Colonic mucosa (tissue), 4 donors: ENCODE measurements at regions of chr9 and their contacts with region 1.

Region 1: GRCh38 chr9:68584189-68585033 is 43.7 kb upstream of the TMEM252 start:
- DNase-seq: peak; percentile 92
- H3K4me3 ChIP-seq: no peak overlapping the region
- H3K27ac ChIP-seq: no peak overlapping the region
- H3K4me1 ChIP-seq: no peaks in the 10 kb centered on the region
- H3K27me3 ChIP-seq: no peaks in the 10 kb centered on the region
- CTCF ChIP-seq: peak; percentile 98

Region 2: GRCh38 chr9:68640421-68641089 is 56.1 kb after region 1 on chr9:
- intact Hi-C with region 1: no loop called
- DNase-seq: no peak
- H3K4me3 ChIP-seq: no peak overlapping the region
- H3K27ac ChIP-seq: no peak overlapping the region
- H3K4me1 ChIP-seq: no peaks in the 10 kb centered on the region
- H3K27me3 ChIP-seq: no peaks in the 10 kb centered on the region
- CTCF ChIP-seq: no peak

Region 3: DNA sequence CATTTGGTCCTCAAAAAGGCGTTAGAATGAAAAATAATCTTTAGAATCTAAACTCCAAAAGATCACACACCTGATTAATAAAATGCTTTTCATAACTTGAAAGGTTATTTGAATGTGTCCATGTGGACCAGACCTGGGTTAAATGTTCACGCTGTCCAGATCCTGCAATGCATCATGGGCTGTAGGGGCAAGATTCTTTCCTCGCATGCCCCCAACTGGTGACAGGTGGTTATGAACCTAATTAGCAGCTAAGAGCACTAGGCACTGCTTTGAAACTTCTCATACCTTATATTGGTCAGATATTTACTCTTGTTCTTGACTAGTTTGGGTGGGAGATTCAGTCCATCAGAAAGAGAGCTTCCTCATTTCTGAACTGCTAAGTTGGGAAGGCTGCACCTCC is 101.4 kb after region 1 on chr9:
- intact Hi-C with region 1: loop called (anchors 5 kb)
- DNase-seq: peak; percentile 82
- H3K4me3 ChIP-seq: no peak overlapping the region
- H3K27ac ChIP-seq: no peak overlapping the region
- H3K4me1 ChIP-seq: no peaks in the 10 kb centered on the region
- H3K27me3 ChIP-seq: no peaks in the 10 kb centered on the region
- CTCF ChIP-seq: peak; percentile 52

Region 4: DNA sequence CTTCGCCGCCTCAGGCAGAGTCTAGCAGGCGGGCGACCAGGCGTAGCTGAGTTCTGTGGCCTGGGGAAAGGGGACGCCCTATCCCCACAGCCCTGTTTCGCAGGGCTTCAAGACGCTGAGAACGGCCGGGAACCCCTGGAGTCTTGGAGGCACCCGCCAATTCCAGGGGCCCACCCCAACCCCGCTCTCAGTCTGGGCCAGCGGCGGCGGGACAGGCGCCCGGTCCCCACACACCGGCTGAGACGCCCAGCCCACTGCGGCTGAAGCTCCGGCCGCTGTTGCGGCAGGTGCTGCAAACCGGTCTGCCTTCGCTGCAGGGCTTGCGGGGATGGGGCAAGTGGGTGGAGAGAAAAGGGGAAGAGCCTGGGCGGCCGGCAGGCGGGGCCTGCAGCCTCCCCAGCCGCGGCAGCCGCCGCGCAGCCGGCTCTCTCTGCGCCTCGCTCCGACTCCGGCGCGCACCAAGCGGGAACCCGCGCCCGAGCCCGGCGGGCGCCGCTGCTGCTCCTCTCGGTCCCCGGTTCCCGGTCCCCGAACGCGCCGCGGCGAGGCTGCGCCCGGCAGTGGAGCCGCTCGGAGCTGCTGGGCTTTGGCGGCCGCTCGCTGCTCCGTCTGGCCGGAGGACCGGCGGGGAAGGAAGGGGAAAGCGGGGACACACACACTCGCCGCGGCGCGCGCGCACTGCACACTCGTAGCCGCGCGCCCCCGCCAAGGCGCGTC is 120.6 kb after region 1 on chr9 and contains the start of gene PIP5K1B:
- intact Hi-C with region 1: no loop called
- DNase-seq: peak; percentile 89
- H3K4me3 ChIP-seq: peak within 1 kb of the TSS; percentile 60
- H3K27ac ChIP-seq: peak within 1 kb of the TSS; percentile 88
- H3K4me1 ChIP-seq: no peaks in the 10 kb centered on the region
- H3K27me3 ChIP-seq: no peaks in the 10 kb centered on the region
- CTCF ChIP-seq: no peak
- total RNA-seq, gene PIP5K1B: 59.2 to 74.2 TPM

Region 5: DNA sequence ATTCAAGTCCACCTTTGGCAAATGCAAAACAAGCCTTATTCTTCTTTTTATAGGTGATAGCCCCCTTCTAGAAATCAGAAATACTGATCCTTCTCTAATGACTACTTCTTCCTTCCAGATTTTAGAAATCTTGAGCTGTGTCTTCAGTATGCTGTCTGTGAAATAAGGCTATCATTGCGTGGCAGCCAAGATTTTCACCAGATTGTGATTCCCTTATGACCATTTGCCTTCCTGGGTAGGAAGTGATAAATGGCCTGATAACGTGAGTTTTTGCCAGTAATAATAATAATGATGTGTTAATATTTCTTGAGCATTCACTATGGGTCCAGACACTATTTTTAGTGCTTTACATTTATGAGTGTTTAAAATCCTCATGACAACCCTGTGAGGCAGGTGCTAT is 201.6 kb after region 1 on chr9:
- intact Hi-C with region 1: loop called (anchors 5 kb)
- DNase-seq: no peak
- H3K4me3 ChIP-seq: no peak overlapping the region
- H3K27ac ChIP-seq: no peak overlapping the region
- H3K4me1 ChIP-seq: peaks cover 5% of the 10 kb centered on the region
- H3K27me3 ChIP-seq: no peaks in the 10 kb centered on the region
- CTCF ChIP-seq: no peak

Region 6: GRCh38 chr9:68999393-69000105 is 415.1 kb after region 1 on chr9:
- intact Hi-C with region 1: loop called (anchors 10 kb)
- DNase-seq: peak; percentile 82
- H3K4me3 ChIP-seq: no peak overlapping the region
- H3K27ac ChIP-seq: no peak overlapping the region
- H3K4me1 ChIP-seq: no peaks in the 10 kb centered on the region
- H3K27me3 ChIP-seq: no peaks in the 10 kb centered on the region
- CTCF ChIP-seq: peak; percentile 76